Uterus (tissue), 4 donors: ENCODE measurements at regions of chr1 and their contacts with region 1.

Region 1: DNA sequence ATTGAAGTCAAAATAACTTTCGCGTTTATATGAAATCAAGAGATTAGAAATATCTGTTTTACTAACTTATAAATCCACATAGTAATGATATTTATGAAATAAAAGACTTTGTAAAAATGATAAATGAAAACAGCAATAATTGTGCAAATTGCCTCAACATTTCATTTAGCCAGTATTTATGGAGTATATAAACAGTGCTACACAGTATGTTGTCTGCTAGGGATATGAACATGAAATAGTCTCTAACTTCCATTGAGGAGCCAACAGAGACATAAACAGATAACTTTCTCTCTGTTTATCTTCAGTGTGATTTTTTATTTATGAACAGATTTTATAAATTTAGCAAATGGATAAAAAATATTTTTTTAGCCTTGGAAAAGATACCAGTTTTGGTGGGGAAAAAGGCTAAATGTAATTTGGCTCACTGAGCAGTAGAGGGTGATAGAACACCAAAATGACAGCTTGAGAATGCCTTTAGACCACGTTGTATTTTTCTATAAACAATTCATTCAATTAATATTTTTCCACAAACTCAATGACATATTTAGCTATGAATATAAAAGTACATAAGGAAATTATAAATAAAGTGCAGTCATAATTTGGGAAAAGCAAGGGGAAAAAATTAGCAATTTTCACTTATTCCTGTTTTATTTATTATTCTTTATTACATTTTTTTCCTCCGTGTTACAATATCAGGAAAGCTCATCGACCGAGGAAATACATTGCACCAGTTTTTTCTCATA is 47.5 kb upstream of the EEIG2 start:
- DNase-seq: no peak
- H3K4me3 ChIP-seq: no peak overlapping the region
- H3K27ac ChIP-seq: no peak overlapping the region
- H3K4me1 ChIP-seq: no peaks in the 10 kb centered on the region
- H3K27me3 ChIP-seq: no peaks in the 10 kb centered on the region
- CTCF ChIP-seq: peak; percentile 82 to 87 (median 86)
- POLR2A ChIP-seq: no peak

Region 2: DNA sequence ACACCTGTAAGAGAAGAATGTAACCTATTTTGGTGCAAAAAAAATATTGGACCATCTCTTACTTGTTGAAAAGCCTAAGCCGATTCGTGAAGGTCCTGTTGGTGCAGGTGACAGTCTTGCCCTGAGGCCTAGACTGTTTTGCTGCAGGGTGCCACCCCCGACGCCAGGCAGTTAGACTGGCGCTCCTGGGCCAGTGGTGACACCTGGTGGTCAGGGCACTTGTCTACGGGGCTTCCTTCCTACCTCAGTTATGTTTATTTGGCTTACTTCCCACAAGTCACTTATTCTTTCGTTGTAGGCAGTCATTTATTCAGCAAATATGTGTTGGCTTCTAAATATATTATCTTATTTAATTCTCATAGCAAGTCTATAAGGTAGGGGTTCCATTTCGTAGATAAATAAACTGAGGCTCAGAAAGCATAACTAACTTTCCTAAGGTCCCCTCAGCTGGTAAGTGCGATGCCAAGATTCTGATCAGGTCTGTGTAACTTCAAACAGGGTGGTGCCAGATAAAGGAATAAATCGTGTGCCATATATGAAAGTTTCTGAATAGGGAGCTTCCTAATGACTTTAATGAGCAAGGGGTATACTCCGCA is 49.4 kb after region 1 on chr1:
- intact Hi-C with region 1: no loop called
- DNase-seq: peak; percentile 19 to 24
- H3K4me3 ChIP-seq: no peak overlapping the region
- H3K27ac ChIP-seq: no peak overlapping the region
- H3K4me1 ChIP-seq: peaks cover 9 to 11% of the 10 kb centered on the region in 2 donors
- H3K27me3 ChIP-seq: no peaks in the 10 kb centered on the region
- CTCF ChIP-seq: peak in 1 of 4 experiments; percentile 30
- POLR2A ChIP-seq: no peak

Region 3: GRCh38 chr1:108595507-108595906 is 83.1 kb after region 1 on chr1:
- intact Hi-C with region 1: no loop called
- DNase-seq: peak in 1 of 2 donors; percentile 17
- H3K4me3 ChIP-seq: no peak overlapping the region
- H3K27ac ChIP-seq: peak overlapping the region; percentile 51 to 60
- H3K4me1 ChIP-seq: peaks cover 0 to 4% of the 10 kb centered on the region in 2 donors
- H3K27me3 ChIP-seq: no peaks in the 10 kb centered on the region
- CTCF ChIP-seq: no peak
- POLR2A ChIP-seq: no peak

Region 4: GRCh38 chr1:108646648-108647269 is 134.3 kb after region 1 on chr1:
- intact Hi-C with region 1: loop called (anchors 5 kb)
- DNase-seq: peak in 1 of 2 donors; percentile 38
- H3K4me3 ChIP-seq: no peak overlapping the region
- H3K27ac ChIP-seq: peak overlapping the region; percentile 10 to 60
- H3K4me1 ChIP-seq: no peaks in the 10 kb centered on the region
- H3K27me3 ChIP-seq: no peaks in the 10 kb centered on the region
- CTCF ChIP-seq: no peak
- POLR2A ChIP-seq: no peak